ENCODE measurements at regions of chr17 and their contacts with region 1.

Region 1: DNA sequence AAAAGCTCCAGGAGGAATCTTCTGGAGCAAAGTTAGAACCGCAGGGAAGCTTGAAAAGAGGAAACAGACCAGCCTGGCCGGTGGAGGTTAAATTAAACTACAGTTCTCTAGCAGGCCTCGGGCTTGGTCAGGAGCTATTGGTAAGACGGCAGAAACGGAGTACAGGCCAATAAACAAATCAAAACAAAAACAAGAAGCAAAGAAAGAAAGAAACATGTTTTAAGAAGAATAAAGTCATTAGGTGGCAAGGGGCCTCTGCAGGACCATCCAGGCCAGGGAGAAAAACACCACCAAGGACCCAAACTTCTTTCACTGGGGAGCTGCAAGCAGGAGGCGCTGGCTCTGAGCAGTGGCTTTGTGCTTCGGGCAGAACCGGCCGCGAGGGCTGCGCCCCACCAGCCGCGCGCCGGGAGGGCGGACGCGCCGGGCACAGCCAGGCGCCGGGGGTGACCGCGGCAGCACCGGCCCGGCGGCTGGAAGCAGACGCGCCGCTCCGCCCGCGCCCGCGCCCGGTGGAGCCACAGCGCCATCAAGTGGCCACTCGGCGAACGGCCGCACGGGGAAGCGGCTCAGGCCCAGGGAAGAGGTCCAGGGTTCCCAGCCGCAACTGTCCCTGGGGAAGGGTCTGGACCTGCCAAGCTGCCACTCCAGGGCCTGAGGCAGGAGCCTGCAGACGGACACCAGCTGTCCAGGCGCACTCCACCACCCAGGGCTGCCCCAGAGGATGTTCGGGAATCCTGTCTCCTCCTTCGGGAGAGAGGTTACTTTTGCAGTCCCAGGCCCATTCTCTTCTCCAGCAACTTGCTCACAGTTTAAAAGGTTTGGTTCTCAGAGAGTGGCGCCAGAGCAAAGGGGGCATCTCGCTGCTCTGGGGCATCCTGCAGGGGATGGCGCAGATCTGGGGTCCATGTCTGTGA is 419.4 kb downstream of the SOX9 start:
- DNase-seq: peak; percentile 54 to 97 (median 86)
- ATAC-seq: peak; percentile 96 to 99 (median 98)
- H3K4me3 ChIP-seq: peak overlapping the region in 2 of 4 donors; percentile 8 to 16
- H3K27ac ChIP-seq: peak overlapping the region; percentile 45 to 67 (median 54)
- H3K4me1 ChIP-seq: peaks cover 0 to 9% (median 0%) of the 10 kb centered on the region in 3 donors
- H3K27me3 ChIP-seq: no peaks in the 10 kb centered on the region
- CTCF ChIP-seq: peak; percentile 83 to 88 (median 84)

Region 2: DNA sequence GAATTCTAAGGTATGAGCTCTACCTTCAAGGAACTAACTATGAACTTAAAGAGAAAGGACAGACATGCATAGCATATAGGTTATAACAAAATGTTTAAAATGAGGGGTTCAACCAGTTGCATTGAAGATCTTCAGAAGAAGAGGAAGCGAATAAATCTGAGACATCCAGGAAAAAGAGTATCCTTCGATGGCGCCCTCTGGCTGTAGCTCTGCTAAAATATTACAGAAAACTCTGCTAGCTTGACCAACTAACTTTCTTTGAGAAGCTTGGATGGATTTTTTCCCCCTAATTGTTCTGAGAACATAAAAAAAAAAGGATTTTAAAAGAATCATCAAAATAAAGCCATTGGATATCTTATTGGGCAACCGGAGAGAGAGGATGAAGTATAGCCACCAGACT is 1079.3 kb before region 1 on chr17:
- intact Hi-C with region 1: loop called in 1 of 3 experiments (anchors 10 kb)
- DNase-seq: peak in 3 of 6 donors; percentile 10 to 62 (median 48)
- ATAC-seq: peak in 3 of 4 donors; percentile 53 to 58 (median 54)
- H3K4me3 ChIP-seq: no peak overlapping the region
- H3K27ac ChIP-seq: no peak overlapping the region
- H3K4me1 ChIP-seq: no peaks in the 10 kb centered on the region
- H3K27me3 ChIP-seq: no peaks in the 10 kb centered on the region
- CTCF ChIP-seq: peak; percentile 8 to 35 (median 18)

Region 3: GRCh38 chr17:71472809-71473789 is 1067.1 kb before region 1 on chr17:
- intact Hi-C with region 1: loop called in 2 of 3 experiments (anchors 10 kb)
- DNase-seq: peak in 3 of 6 donors; percentile 12 to 42 (median 17)
- ATAC-seq: peak; percentile 68 to 98 (median 94)
- H3K4me3 ChIP-seq: no peak overlapping the region
- H3K27ac ChIP-seq: no peak overlapping the region
- H3K4me1 ChIP-seq: no peaks in the 10 kb centered on the region
- H3K27me3 ChIP-seq: no peaks in the 10 kb centered on the region
- CTCF ChIP-seq: peak; percentile 28 to 60 (median 54)

Measured in pancreas (tissue), 10 donors.